Activated T-helper 1 cell treated with anti-CD3 and anti-CD28 coated beads, Interleukin-12 subunit alpha, Interleukin-12 subunit beta, Interleukin-2, Interleukin-4 antibody, amounts not matched to agents 30 ng/mL and 10 ng/mL and 1 ng/mL, durations not matched to agents 14 hours and 24 hours and 36 hours (primary cell): ENCODE measurements at regions of chr17 and their contacts with region 1.

Region 1: GRCh38 chr17:7045909-7046724 is 2.2 kb upstream of the SLC16A11 start:
- DNase-seq: no peak
- H3K4me3 Mint-ChIP-seq: peak overlapping the region; percentile 66
- H3K27ac Mint-ChIP-seq: peak overlapping the region; percentile 72
- H3K4me1 Mint-ChIP-seq: peaks cover 20% of the 10 kb centered on the region
- H3K27me3 Mint-ChIP-seq: peaks cover 8% of the 10 kb centered on the region

Region 2: GRCh38 chr17:7060165-7060891 is 14.2 kb after region 1 on chr17:
- intact Hi-C with region 1: loop called (anchors 1 kb)
- DNase-seq: no peak
- H3K4me3 Mint-ChIP-seq: peak overlapping the region; percentile 37
- H3K27ac Mint-ChIP-seq: peak overlapping the region; percentile 74
- H3K4me1 Mint-ChIP-seq: peaks cover 15% of the 10 kb centered on the region
- H3K27me3 Mint-ChIP-seq: peaks cover 4% of the 10 kb centered on the region

Region 3: DNA sequence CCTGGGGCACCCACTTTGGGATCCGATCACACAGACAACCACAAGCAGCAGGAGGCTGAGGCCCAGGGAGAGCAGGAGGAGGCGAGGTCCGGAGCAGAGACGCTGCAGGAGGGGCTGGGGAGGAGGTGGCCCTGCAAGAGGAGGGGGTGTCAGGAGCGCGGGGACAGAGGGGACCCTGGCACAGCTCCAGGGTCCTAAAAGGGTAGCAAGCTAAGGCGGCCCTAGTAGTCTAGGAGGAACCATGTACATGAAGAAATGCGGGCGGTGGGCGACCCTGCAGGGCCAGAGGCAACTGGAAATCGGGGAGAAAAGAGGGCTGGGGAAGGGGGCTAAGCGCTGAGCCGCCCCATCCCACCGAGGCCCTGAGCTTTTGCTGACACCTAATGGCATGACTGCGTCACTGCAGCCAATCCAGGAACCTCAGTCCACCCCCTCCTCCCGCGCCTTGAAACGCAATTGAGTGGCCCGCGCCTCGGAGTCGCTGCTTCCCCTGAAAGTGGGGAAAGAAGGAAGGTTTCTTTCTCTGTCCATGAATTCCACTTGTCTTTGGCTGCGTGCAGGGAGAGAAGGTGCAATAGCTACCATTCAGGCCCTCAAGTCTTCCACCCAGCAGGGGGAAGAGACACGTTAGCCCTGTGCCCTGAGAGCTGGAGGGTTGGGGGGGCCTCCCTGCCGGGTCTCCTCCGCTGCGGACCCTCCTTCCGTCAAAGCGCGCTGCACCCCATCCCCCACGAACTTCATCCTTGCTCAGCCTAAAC is 131.3 kb after region 1 on chr17:
- intact Hi-C with region 1: loop called (anchors 1 kb)
- DNase-seq: peak; percentile 58
- H3K4me3 Mint-ChIP-seq: peak overlapping the region; percentile 74
- H3K27ac Mint-ChIP-seq: no peak overlapping the region
- H3K4me1 Mint-ChIP-seq: peaks cover 10% of the 10 kb centered on the region
- H3K27me3 Mint-ChIP-seq: peaks cover 12% of the 10 kb centered on the region

Region 4: GRCh38 chr17:7214300-7215135 is 168.4 kb after region 1 on chr17:
- intact Hi-C with region 1: loop called (anchors 2 kb)
- DNase-seq: peak; percentile 99
- H3K4me3 Mint-ChIP-seq: peak overlapping the region; percentile 91
- H3K27ac Mint-ChIP-seq: peak overlapping the region; percentile 98
- H3K4me1 Mint-ChIP-seq: peaks cover 55% of the 10 kb centered on the region
- H3K27me3 Mint-ChIP-seq: peaks cover 14% of the 10 kb centered on the region

Region 5: GRCh38 chr17:7296189-7296902 is 250.2 kb after region 1 on chr17:
- intact Hi-C with region 1: loop called (anchors 1 kb)
- DNase-seq: peak; percentile 63
- H3K4me3 Mint-ChIP-seq: peak overlapping the region; percentile 22
- H3K27ac Mint-ChIP-seq: no peak overlapping the region
- H3K4me1 Mint-ChIP-seq: peaks cover 16% of the 10 kb centered on the region
- H3K27me3 Mint-ChIP-seq: peaks cover 34% of the 10 kb centered on the region